T-cell (primary cell): ENCODE measurements at regions of chr20 and their contacts with region 1.

Region 1: GRCh38 chr20:19583532-19584175 is 174.4 kb upstream of the RIN2 start:
- DNase-seq: peak in 20 of 35 experiments; percentile 3 to 40 (median 12)
- ATAC-seq: no peak
- H3K4me3 ChIP-seq: no peak overlapping the region
- H3K4me3 Mint-ChIP-seq: no peak overlapping the region
- H3K27ac ChIP-seq: no peak overlapping the region
- H3K27ac Mint-ChIP-seq: no peak overlapping the region
- H3K4me1 ChIP-seq: no peaks in the 10 kb centered on the region
- H3K4me1 Mint-ChIP-seq: no peaks in the 10 kb centered on the region
- H3K27me3 ChIP-seq: peaks cover 0 to 15% of the 10 kb centered on the region in 2 experiments
- H3K27me3 Mint-ChIP-seq: peaks cover 2 to 6% of the 10 kb centered on the region in 2 donors

Region 2: DNA sequence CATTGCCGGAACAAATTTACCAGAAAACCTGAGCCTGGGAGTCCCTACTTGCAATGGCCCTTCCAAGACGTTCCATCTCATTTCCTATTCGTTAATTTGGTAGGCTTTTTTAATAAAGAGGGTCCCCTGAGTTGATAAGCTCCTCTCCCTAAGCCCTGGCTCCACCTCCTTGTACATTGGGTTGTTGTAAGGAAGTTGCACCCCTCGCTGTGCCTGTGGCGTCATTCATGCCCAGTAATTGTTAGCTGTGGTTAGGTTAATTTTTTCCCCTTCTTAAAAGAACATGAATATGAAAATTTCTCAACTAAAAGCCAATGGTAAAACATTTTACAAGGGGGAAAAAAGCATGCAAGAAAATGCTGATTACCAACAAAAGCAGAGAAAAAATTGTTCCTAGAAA is 279.3 kb before region 1 on chr20:
- CTCF ChIA-PET with region 1: no interaction called
- POLR2A ChIA-PET with region 1: no interaction called
- DNase-seq: no peak
- ATAC-seq: no peak
- H3K4me3 ChIP-seq: no peak overlapping the region
- H3K4me3 Mint-ChIP-seq: no peak overlapping the region
- H3K27ac ChIP-seq: no peak overlapping the region
- H3K27ac Mint-ChIP-seq: no peak overlapping the region
- H3K4me1 ChIP-seq: no peaks in the 10 kb centered on the region
- H3K4me1 Mint-ChIP-seq: no peaks in the 10 kb centered on the region
- H3K27me3 ChIP-seq: no peaks in the 10 kb centered on the region
- H3K27me3 Mint-ChIP-seq: peaks cover 0 to 9% of the 10 kb centered on the region in 2 donors

Region 3: DNA sequence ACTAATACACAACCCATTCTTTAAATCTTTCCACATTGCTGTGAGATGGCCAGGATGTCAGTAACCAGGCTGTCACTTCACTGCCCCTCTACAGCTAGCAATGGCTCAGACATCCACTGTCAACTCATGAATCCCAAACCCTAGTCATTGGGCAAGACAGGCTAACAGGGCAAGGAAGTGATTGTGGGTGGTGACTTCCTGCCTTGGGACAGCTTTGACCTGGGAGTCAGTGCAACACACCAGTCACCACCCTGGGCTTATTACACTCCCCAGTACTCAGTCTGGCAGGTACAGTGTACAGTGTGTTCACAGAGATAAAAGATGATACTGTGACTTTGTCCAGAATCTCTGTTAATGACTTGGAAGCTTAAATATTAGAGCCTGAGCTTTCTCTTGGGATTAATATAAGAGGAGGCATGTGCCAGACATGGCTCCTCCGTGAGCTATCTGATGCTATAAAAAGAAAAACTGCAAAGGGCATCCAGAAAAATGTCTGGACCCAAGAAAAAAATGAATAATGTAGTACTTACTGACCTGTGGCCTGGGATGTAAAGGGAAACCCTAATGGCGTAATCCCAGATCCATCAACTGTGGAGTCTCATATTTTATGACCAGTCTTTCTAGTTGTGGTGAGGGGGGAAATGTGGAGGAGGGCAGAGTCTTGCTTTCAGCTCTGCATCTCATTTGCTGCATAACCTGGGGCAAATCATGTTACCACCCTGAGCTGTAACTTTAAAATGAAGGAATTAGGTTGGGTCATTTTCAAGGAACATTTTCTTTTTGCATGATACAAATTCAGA is 126.9 kb before region 1 on chr20:
- CTCF ChIA-PET with region 1: interaction called in 1 of 2 experiments, 11 read pairs
- POLR2A ChIA-PET with region 1: no interaction called
- DNase-seq: no peak
- ATAC-seq: no peak
- H3K4me3 ChIP-seq: no peak overlapping the region
- H3K4me3 Mint-ChIP-seq: no peak overlapping the region
- H3K27ac ChIP-seq: no peak overlapping the region
- H3K27ac Mint-ChIP-seq: no peak overlapping the region
- H3K4me1 ChIP-seq: no peaks in the 10 kb centered on the region
- H3K4me1 Mint-ChIP-seq: peaks cover 4 to 7% (median 6%) of the 10 kb centered on the region in 3 donors
- H3K27me3 ChIP-seq: peaks cover 0 to 6% of the 10 kb centered on the region in 2 experiments
- H3K27me3 Mint-ChIP-seq: peaks cover 0 to 3% of the 10 kb centered on the region in 2 donors